ENCODE measurements at regions of chr20 and their contacts with region 1.

Region 1: DNA sequence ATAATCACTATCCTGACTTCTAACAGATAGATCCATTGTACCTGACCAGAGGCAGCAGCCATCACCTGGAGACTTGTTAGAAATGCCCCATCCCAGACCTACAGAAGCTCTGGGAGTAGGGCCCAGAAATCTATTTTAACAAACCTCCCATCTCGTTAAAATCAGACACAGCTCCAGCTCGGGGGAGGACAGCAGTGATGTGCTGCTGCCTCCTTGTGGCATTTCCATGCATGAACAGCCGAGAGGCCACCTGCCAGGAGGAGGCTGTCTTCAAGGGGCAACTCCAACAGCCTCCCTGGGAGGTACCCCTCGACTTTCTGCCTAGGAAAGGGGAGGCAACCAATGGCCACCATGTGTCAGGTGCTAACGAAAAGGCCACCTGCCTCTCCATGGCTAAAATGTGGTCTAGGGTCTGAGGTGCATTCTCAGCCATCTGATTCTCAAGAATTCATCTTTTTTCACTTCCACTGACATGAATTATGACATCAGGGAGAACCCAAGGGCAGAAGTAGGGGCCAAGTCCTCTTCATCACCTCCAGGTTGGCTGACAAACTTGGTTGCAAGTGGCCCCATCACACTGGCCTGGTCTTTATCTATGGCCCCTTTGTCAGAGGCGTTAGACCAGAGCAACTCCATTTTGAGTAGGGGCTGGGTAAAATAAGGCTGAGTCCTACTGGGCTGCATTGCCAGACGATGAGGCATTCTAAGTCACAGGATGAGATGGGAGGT is 12.2 kb upstream of the KCNK15 start:
- DNase-seq: peak; percentile 82 to 89
- H3K4me3 ChIP-seq: no peak overlapping the region
- H3K4me3 Mint-ChIP-seq: no peak overlapping the region
- H3K27ac Mint-ChIP-seq: peak overlapping the region; percentile 9
- H3K4me1 ChIP-seq: peaks cover 36% of the 10 kb centered on the region
- H3K4me1 Mint-ChIP-seq: peaks cover 44% of the 10 kb centered on the region
- H3K27me3 ChIP-seq: no peaks in the 10 kb centered on the region
- H3K27me3 Mint-ChIP-seq: no peaks in the 10 kb centered on the region
- CTCF ChIP-seq: peak; percentile 95 to 98

Region 2: GRCh38 chr20:44210422-44211176 is 522.9 kb before region 1 on chr20 and contains the start of gene OSER1:
- CTCF ChIA-PET with region 1: no interaction called
- POLR2A ChIA-PET with region 1: interaction called, 3 read pairs
- intact Hi-C with region 1: loop called (anchors 10 kb)
- DNase-seq: peak; percentile 100
- H3K4me3 ChIP-seq: peak within 1 kb of the TSS; percentile 74
- H3K4me3 Mint-ChIP-seq: peak within 1 kb of the TSS; percentile 95
- H3K27ac Mint-ChIP-seq: peak within 1 kb of the TSS; percentile 96
- H3K4me1 ChIP-seq: peaks cover 19% of the 10 kb centered on the region
- H3K4me1 Mint-ChIP-seq: peaks cover 27% of the 10 kb centered on the region
- H3K27me3 ChIP-seq: no peaks in the 10 kb centered on the region
- H3K27me3 Mint-ChIP-seq: no peaks in the 10 kb centered on the region
- CTCF ChIP-seq: no peak
- total RNA-seq, gene OSER1: 79.7 and 82.3 TPM in 2 replicates

Region 3: GRCh38 chr20:44532259-44532980 is 201.1 kb before region 1 on chr20:
- CTCF ChIA-PET with region 1: no interaction called
- POLR2A ChIA-PET with region 1: no interaction called
- intact Hi-C with region 1: loop called (anchors 10 kb)
- DNase-seq: no peak
- H3K4me3 ChIP-seq: peak overlapping the region; percentile 71
- H3K4me3 Mint-ChIP-seq: no peak overlapping the region
- H3K27ac Mint-ChIP-seq: no peak overlapping the region
- H3K4me1 ChIP-seq: peaks cover 21% of the 10 kb centered on the region
- H3K4me1 Mint-ChIP-seq: no peaks in the 10 kb centered on the region
- H3K27me3 ChIP-seq: no peaks in the 10 kb centered on the region
- H3K27me3 Mint-ChIP-seq: no peaks in the 10 kb centered on the region
- CTCF ChIP-seq: no peak

Region 4: DNA sequence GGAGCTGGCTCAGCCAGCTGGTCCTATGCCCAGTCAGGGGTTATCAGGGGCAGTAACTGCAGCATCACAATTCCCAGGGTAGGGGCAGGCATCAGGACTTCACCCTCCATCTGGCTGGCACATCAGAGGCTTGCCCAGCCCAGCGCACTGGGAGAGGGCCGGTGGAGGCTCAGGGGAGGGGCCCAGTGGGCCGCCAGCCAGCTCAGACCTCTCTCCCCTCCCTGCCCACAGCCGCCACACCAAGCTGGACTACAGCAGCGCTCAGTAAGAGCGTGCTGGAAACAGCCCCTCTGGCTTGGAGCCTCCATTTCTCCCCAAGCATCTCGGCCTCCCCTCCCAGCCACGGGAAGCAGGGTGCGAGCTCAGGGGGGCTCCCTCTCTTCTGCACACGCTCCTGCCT is 104.0 kb before region 1 on chr20:
- CTCF ChIA-PET with region 1: no interaction called
- POLR2A ChIA-PET with region 1: no interaction called
- intact Hi-C with region 1: no loop called
- DNase-seq: no peak
- H3K4me3 ChIP-seq: no peak overlapping the region
- H3K4me3 Mint-ChIP-seq: no peak overlapping the region
- H3K27ac Mint-ChIP-seq: no peak overlapping the region
- H3K4me1 ChIP-seq: 0 out of 2 replicates have a peak, but pooled peaks cover 3% of the 10 kb centered on the region
- H3K4me1 Mint-ChIP-seq: no peaks in the 10 kb centered on the region
- H3K27me3 ChIP-seq: no peaks in the 10 kb centered on the region
- H3K27me3 Mint-ChIP-seq: no peaks in the 10 kb centered on the region
- CTCF ChIP-seq: no peak

Region 5: GRCh38 chr20:44692932-44693476 is 40.5 kb before region 1 on chr20:
- CTCF ChIA-PET with region 1: interaction called, 9 read pairs
- POLR2A ChIA-PET with region 1: no interaction called
- intact Hi-C with region 1: loop called (anchors 1 kb)
- DNase-seq: peak; percentile 96 to 98
- H3K4me3 ChIP-seq: no peak overlapping the region
- H3K4me3 Mint-ChIP-seq: peak overlapping the region; percentile 64
- H3K27ac Mint-ChIP-seq: peak overlapping the region; percentile 87
- H3K4me1 ChIP-seq: peaks cover 21% of the 10 kb centered on the region
- H3K4me1 Mint-ChIP-seq: peaks cover 29% of the 10 kb centered on the region
- H3K27me3 ChIP-seq: no peaks in the 10 kb centered on the region
- H3K27me3 Mint-ChIP-seq: no peaks in the 10 kb centered on the region
- CTCF ChIP-seq: no peak